PC-9 (cell line): ENCODE measurements at regions of chr1 and their contacts with region 1.

Region 1: DNA sequence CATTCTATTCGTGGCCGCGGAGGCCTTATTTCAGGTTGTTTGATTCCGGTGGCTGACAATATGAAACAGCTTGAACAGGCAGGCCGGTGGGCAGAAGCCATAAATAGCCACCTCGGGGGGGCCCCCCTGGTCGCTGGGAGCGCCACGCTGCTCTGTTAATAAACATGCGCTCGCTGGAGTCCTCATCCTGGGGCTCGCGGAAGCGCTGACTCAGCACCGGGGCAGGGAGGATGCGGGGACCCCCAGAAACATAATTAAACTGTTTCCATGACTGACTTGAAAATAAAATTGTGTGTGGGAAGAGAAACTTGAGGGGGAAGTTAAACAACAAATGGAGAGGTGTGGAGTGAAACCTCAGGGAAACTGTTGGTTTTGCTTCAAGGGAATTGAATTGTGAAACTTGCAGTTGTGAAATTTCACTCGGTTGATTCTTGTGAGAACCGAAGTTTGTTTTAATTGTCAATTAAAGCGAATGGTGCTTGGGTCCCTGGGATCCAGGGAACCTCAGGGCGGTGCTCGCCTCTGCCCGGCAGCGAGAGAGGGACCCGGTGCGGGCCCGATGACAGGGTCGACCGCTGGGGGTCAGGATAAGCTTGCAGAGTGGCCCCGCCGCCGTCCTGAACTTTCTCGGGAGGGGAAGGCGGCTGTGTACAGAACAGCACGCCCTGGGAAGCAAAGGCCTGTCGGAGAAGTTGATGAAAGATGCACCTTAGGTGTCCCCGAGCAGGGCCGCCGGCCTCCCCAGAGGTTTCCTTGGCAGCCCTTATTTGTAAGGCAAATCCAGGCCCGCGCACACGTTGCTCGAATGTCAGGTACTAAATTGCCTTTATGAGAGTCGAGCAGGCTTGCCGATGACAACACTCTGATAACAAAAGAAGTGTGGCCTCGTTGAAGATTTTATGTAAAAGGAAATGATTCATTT is 176.9 kb upstream of the LMO4 start:
- DNase-seq: peak in 1 of 2 experiments; percentile 71
- H3K4me3 ChIP-seq: no peak overlapping the region
- H3K27ac ChIP-seq: peak overlapping the region; percentile 78; the same call in 1 of the 2 replicates
- H3K4me1 ChIP-seq: peaks cover 34% of the 10 kb centered on the region
- H3K27me3 ChIP-seq: no peaks in the 10 kb centered on the region
- CTCF ChIP-seq: no peak; the same call in 1 of the 2 replicates

Region 2: GRCh38 chr1:87045761-87046304 is 105.9 kb before region 1 on chr1:
- CTCF ChIA-PET with region 1: no interaction called
- POLR2A ChIA-PET with region 1: no interaction called
- intact Hi-C with region 1: no loop called
- DNase-seq: no peak
- H3K4me3 ChIP-seq: no peak overlapping the region
- H3K27ac ChIP-seq: no peak overlapping the region
- H3K4me1 ChIP-seq: no peaks in the 10 kb centered on the region
- H3K27me3 ChIP-seq: no peaks in the 10 kb centered on the region
- CTCF ChIP-seq: no peak

Region 3: GRCh38 chr1:87074001-87074795 is 77.6 kb before region 1 on chr1:
- CTCF ChIA-PET with region 1: no interaction called
- POLR2A ChIA-PET with region 1: no interaction called
- intact Hi-C with region 1: no loop called
- DNase-seq: no peak
- H3K4me3 ChIP-seq: no peak overlapping the region
- H3K27ac ChIP-seq: no peak overlapping the region
- H3K4me1 ChIP-seq: no peaks in the 10 kb centered on the region
- H3K27me3 ChIP-seq: no peaks in the 10 kb centered on the region
- CTCF ChIP-seq: no peak

Region 4: DNA sequence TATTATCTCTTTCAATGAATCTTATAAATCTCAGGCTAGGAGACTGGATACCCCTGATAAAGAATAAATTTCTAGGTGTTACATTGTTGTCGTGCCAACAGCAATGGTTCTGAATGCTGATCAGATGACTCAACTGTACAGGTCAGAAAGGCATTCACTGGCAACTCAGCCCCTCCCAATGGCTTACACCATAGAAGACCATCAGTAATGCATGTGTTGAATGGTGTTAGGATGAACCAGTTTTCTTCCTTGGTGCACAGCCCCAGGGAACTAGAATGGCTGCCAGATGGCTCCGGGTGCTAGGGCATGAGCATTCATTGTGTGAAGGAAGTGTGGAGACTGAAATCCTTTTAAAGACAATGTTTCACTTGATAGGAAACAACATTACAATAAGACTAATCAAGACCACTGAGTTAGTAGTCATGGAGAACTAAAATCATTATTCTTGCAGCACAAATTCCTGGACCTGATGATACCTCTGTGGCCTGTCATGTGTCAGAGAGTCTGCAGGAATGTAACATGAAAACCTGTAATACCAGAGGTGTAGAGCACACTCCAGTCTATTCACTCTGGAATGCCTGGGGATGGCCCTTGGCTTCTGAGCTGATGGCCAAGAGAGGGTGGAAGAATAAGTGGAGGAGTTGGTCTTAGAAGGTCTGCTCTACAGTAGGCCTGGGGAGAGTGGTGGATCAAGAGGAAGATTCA is 10.8 kb before region 1 on chr1:
- CTCF ChIA-PET with region 1: no interaction called
- POLR2A ChIA-PET with region 1: no interaction called
- intact Hi-C with region 1: loop called (anchors 1 kb)
- DNase-seq: peak; percentile 75 to 97
- H3K4me3 ChIP-seq: no peak overlapping the region
- H3K27ac ChIP-seq: peak overlapping the region; percentile 67
- H3K4me1 ChIP-seq: peaks cover 26% of the 10 kb centered on the region
- H3K27me3 ChIP-seq: no peaks in the 10 kb centered on the region
- CTCF ChIP-seq: no peak

Region 5: DNA sequence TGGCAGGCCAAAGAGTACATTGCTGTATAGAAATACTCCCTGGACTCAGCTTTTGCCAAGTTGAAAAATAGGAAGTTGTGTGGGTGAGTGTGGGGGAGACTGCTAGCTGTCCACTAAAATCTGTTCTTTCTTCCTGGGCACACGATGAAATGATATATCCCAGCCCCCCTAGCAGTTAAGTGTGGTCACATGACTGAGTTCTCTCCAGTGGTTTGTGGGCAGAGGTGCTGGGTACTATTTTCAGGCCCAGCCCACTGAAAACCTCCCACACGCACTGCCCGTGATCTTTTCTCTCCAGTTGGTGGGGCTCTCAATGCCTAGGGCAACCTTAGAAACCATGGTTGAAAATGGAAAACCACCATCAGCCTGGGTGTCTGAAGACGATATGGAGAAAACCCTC is 57.2 kb after region 1 on chr1:
- CTCF ChIA-PET with region 1: no interaction called
- POLR2A ChIA-PET with region 1: no interaction called
- intact Hi-C with region 1: no loop called
- DNase-seq: no peak
- H3K4me3 ChIP-seq: no peak overlapping the region
- H3K27ac ChIP-seq: no peak overlapping the region
- H3K4me1 ChIP-seq: peaks cover 14% of the 10 kb centered on the region
- H3K27me3 ChIP-seq: no peaks in the 10 kb centered on the region
- CTCF ChIP-seq: no peak

Region 6: GRCh38 chr1:87226341-87226760 is 74.6 kb after region 1 on chr1:
- CTCF ChIA-PET with region 1: interaction called, 3 read pairs
- POLR2A ChIA-PET with region 1: no interaction called
- intact Hi-C with region 1: loop called (anchors 2 kb)
- DNase-seq: peak; percentile 84 to 98
- H3K4me3 ChIP-seq: 0 out of 2 replicates have a peak overlapping the region, but pooled peaks have one; percentile 10
- H3K27ac ChIP-seq: peak overlapping the region; percentile 90
- H3K4me1 ChIP-seq: peaks cover 43% of the 10 kb centered on the region
- H3K27me3 ChIP-seq: no peaks in the 10 kb centered on the region
- CTCF ChIP-seq: no peak

Region 7: GRCh38 chr1:87292684-87293493 is 141.1 kb after region 1 on chr1:
- CTCF ChIA-PET with region 1: no interaction called
- POLR2A ChIA-PET with region 1: no interaction called
- intact Hi-C with region 1: loop called (anchors 5 kb)
- DNase-seq: peak; percentile 42 to 48
- H3K4me3 ChIP-seq: no peak overlapping the region
- H3K27ac ChIP-seq: no peak overlapping the region
- H3K4me1 ChIP-seq: no peaks in the 10 kb centered on the region
- H3K27me3 ChIP-seq: no peaks in the 10 kb centered on the region
- CTCF ChIP-seq: peak; percentile 96

Region 8: DNA sequence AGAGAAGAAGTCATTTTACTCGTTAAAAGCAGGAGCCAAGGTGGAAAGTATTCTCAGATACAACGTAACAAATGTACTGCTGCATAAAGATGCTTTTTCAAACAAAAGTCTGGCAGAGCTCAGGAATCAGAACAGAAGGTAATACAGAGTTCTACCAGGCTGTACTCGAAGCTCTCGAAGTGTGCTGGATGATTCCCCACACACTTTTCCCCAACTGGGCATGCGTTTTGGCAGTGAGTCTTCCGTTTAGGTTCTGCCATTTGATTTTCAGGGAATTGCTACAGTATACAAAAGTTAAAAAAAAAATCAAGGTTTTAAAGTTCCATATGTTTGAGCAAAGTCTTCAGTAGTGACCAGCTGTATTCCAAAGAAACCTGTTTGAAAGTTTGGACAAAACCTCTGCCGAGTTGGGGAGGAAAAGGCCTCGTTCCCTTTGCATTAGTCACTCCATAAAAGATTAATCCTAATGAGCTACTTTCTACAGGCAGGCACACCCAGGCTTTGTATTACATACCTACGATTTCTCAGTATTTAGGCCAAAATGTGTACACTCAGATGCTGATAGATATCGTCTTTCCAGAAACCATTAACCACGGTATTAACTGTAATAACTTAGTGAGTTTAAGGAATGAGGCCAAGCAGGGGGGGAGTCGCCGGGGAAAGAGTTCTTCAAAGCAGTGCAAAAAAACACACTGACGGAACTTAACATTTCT is 654.1 kb after region 1 on chr1:
- CTCF ChIA-PET with region 1: no interaction called
- POLR2A ChIA-PET with region 1: no interaction called
- intact Hi-C with region 1: loop called (anchors 10 kb)
- DNase-seq: peak; percentile 58 to 89
- H3K4me3 ChIP-seq: peak overlapping the region; percentile 27; the same call in 1 of the 2 replicates
- H3K27ac ChIP-seq: peak overlapping the region; percentile 29
- H3K4me1 ChIP-seq: peaks cover 22% of the 10 kb centered on the region
- H3K27me3 ChIP-seq: no peaks in the 10 kb centered on the region
- CTCF ChIP-seq: no peak

Region 9: DNA sequence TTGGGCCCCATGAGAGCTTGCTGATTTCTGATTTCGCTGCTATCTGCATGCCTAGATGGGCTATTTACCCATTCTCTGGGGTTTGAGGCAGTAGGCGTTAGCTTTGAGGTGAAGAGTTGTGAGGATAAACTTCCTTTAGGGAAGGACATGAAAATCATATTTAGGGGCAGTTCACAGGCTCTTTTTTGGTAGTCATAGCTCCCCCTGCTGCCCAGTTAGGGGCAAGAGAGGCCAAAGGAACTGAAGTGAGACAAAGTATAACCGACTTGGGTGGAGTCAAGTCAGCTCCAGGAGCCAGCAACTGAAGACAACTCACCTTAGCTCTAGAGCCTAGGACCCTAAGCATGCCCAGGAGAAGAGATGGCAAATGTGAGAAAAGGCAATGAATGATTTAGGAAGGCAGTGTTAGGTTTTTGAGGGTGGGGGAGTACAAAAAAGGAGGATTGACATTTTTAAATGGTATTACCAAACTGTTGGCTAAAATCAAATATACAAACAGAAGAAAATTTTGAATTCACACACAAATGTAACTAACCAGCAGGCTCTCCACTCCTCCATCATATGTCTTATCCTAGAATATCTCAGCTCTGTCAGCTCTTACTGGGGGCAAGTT is 802.1 kb after region 1 on chr1:
- CTCF ChIA-PET with region 1: no interaction called
- POLR2A ChIA-PET with region 1: no interaction called
- intact Hi-C with region 1: loop called (anchors 10 kb)
- DNase-seq: peak; percentile 48 to 59
- H3K4me3 ChIP-seq: no peak overlapping the region
- H3K27ac ChIP-seq: no peak overlapping the region
- H3K4me1 ChIP-seq: no peaks in the 10 kb centered on the region
- H3K27me3 ChIP-seq: no peaks in the 10 kb centered on the region
- CTCF ChIP-seq: peak; percentile 93